Activated CD4-positive, alpha-beta T cell treated with anti-CD3 and anti-CD28 coated beads, Interleukin-2, amount 10 ng/mL, durations not matched to agents 7 days and 5 days (primary cell): ENCODE measurements at regions of chr5 and their contacts with region 1.

Region 1: DNA sequence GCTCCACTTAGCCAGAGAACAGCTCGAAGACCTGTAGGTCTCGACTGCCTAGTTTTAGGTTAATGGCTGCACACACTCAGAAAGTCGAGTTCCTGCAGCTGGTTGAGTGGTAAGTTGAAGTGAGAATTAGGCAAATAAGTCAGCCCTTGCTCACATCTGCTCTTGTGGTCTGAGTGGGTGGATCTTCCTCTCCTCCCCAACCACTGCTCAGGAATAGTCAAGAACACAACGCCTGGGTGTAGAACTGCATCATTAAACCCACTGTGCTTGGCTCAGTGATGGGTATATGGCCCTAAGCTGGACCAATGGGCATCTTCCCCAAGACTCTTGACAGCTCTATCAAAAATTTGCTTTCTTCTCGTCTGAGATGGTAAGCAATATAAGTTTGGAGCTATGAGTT is 20.9 kb upstream of the ADAM19 start:
- DNase-seq: peak; percentile 51
- H3K4me3 Mint-ChIP-seq: no peak overlapping the region
- H3K27ac Mint-ChIP-seq: peak overlapping the region; percentile 85
- H3K4me1 Mint-ChIP-seq: peaks cover 96% of the 10 kb centered on the region
- H3K27me3 Mint-ChIP-seq: no peaks in the 10 kb centered on the region

Region 2: GRCh38 chr5:157303667-157304327 is 292.7 kb before region 1 on chr5:
- CTCF ChIA-PET with region 1: no interaction called
- POLR2A ChIA-PET with region 1: no interaction called
- DNase-seq: peak; percentile 71
- H3K4me3 Mint-ChIP-seq: peak overlapping the region; percentile 76
- H3K27ac Mint-ChIP-seq: peak overlapping the region; percentile 96
- H3K4me1 Mint-ChIP-seq: peaks cover 75% of the 10 kb centered on the region
- H3K27me3 Mint-ChIP-seq: no peaks in the 10 kb centered on the region

Region 3: DNA sequence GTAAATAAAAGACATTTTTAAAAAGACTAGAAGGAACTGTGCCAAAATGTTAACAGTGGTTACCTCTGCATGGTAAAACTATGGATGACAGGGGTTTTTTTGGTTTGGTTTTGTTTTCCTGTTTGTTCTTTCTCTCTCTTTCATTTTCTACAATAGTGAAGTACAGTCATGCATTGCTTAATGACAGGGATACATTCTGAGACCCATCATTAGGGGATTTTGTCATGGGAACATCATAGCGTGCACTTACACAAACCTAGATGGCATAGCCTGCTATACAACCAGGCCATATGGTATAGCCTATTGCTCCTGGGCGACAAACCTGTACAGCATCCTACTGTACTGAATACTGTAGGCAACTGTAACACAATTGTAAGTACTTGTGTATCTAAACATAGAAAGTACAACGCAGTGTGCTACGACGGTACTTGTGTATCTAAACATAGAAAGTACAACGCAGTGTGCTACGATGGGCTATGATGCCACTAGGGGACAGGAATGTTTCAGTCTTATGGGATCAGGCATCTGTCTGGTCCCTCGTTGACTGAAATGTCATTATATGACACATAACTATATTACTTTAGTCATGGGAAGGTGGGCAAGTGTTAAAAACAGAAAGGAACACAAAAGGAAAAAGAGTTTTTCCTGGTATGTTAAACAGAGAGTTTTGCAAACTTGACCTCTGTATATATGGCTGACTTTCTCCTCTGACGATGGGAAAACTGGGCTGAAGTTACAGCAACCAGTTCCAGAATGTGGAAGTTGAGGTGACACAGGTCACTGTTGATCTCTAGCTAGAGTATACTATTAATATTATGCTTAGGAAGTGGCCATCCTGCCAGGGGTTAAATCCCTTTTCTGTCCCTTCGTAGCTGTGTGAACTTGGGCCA is 13.5 kb before region 1 on chr5:
- CTCF ChIA-PET with region 1: interaction called, 16 read pairs
- POLR2A ChIA-PET with region 1: no interaction called
- DNase-seq: no peak
- H3K4me3 Mint-ChIP-seq: peak overlapping the region; percentile 5
- H3K27ac Mint-ChIP-seq: peak overlapping the region; percentile 70
- H3K4me1 Mint-ChIP-seq: peaks cover 52% of the 10 kb centered on the region
- H3K27me3 Mint-ChIP-seq: no peaks in the 10 kb centered on the region

Region 4: DNA sequence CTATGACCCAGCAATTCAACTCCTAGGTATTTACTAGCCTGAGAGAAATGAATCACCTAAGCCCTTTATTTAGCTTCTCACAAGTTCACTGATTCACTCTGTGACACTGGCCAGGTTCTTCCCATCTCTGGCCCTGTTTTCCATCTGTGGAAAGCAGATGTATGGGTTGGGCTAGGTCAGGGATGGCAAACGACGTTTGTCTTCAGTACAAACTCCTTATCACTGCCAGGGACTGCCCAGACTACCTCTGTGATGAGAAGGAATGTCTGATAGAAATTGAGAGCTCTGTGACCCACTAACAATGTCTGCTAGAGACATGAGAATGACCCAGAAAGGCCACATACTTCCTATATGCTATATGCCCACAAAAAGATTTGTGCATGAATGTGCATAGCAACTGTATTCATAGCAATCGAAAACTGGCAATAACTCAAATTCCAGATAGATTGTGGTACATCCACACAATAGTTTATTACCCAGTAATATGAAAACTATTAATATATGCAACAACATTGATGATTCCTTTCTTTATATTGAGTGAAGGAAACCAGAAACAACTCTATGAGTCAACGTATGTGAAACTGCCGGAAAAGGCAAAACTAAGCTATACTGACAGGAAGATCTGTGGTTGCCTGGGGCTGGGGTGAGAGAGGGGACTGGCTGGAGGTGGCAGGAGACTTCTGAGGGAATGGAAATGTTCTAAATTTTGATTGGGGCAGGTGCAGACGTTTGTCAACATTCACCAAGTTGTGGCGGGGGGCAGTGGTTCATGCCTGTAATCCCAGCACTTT is 11.1 kb after region 1 on chr5:
- CTCF ChIA-PET with region 1: interaction called, 30 read pairs
- POLR2A ChIA-PET with region 1: interaction called, 3 read pairs
- DNase-seq: peak; percentile 78
- H3K4me3 Mint-ChIP-seq: peak overlapping the region; percentile 37
- H3K27ac Mint-ChIP-seq: peak overlapping the region; percentile 77
- H3K4me1 Mint-ChIP-seq: peaks cover 79% of the 10 kb centered on the region
- H3K27me3 Mint-ChIP-seq: no peaks in the 10 kb centered on the region